ENCODE measurements at regions of chr1 and their contacts with region 1.

Region 1: DNA sequence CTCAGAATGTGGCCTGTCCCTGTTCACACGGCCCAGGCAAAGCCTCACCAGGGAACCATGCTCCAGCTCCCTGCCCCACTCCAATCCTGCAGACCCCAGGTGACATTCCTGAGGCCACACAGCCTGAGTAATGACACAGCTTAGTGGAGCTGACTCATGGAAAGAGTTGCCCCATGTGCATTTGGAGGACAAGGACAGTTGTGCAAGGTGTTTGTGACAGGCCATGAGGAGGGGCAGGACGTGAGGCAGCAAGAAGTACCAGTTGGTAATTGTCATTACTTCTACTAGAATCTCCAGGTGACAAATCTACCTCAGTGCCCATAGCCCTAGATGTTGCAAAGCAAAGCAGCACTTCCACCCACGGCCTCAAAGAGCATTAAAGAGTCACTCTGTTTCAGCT is 15.2 kb downstream of the PRR9 start:
- DNase-seq: no peak
- H3K4me3 Mint-ChIP-seq: no peak overlapping the region
- H3K27ac Mint-ChIP-seq: no peak overlapping the region
- H3K4me1 Mint-ChIP-seq: no peaks in the 10 kb centered on the region
- H3K27me3 Mint-ChIP-seq: peaks cover 10% of the 10 kb centered on the region

Region 2: DNA sequence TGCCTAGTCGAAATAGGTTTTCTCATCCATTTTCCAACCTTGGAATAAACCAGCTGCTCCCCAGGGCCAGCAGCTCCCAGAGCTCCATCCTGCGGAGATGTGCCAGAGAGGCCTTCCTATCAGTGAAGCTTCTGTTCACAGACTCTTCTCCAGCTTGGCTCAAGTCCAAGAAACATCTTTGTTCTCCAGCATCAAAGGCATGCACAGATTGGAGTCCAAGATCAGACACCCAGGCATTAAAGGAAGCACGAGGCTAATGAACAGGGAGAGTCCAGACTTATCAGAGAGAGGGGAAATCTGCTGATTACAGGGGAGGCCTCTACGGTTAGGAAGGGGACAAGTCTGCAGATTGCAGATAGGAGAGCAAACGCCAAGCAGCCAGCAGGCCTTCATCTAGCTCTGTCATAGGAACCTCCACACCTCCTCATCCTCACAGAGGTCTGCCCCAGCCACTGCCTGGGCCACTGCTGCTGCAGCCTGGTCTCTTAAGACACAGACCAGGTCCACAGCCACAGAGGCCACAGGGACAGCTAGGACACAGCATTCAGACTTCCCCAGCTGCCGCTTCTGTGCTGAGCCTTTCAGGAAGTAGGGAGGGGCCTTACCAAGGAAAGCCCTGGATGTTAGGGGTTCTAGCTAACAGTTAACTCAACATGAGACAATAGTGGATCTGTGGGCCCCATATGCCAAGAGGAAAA is 11.8 kb before region 1 on chr1:
- CTCF ChIA-PET with region 1: interaction called, 16 read pairs
- DNase-seq: no peak
- H3K4me3 Mint-ChIP-seq: no peak overlapping the region
- H3K27ac Mint-ChIP-seq: no peak overlapping the region
- H3K4me1 Mint-ChIP-seq: peaks cover 2% of the 10 kb centered on the region
- H3K27me3 Mint-ChIP-seq: peaks cover 21% of the 10 kb centered on the region